ENCODE measurements at regions of chr2 and their contacts with region 1.

Region 1: DNA sequence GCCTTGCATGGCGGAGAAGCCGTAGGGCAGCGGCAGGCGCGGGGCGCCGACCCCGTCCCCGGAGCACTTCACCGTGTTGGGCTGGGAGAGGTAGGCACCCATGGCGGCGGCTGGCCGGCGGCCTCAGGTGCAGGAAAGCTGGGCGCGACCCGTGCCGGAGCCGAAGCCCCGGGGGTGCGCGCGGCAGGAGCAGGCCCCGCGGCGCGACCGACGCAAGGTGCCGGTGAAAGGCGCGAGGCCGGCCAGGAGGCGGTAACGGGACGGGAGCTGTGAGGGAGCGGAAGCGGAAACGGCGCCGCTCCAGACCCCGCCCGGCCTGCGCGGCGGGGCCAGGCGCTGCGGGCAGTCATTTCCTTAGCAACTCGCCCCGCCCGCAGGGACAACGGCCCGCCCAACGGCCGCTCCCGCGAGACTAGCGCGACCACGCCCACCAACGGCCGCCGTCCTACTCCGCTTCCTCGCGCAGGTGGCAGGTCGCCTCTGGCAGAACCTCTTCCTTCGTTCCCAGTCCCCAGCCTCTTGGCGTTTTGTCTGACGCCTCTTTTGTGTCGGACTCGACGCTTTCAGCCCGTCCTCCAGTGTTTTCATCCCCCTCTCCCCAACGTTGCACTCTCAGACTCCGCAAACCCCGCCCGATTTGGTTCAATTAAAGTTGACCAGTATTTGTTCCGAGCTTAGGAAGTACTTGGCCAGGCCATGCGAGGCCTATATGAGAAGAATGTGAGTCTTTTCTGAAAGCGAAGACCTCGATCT is at the start of gene PPM1G:
- DNase-seq: peak; percentile 93 to 100 (median 97)

Region 2: DNA sequence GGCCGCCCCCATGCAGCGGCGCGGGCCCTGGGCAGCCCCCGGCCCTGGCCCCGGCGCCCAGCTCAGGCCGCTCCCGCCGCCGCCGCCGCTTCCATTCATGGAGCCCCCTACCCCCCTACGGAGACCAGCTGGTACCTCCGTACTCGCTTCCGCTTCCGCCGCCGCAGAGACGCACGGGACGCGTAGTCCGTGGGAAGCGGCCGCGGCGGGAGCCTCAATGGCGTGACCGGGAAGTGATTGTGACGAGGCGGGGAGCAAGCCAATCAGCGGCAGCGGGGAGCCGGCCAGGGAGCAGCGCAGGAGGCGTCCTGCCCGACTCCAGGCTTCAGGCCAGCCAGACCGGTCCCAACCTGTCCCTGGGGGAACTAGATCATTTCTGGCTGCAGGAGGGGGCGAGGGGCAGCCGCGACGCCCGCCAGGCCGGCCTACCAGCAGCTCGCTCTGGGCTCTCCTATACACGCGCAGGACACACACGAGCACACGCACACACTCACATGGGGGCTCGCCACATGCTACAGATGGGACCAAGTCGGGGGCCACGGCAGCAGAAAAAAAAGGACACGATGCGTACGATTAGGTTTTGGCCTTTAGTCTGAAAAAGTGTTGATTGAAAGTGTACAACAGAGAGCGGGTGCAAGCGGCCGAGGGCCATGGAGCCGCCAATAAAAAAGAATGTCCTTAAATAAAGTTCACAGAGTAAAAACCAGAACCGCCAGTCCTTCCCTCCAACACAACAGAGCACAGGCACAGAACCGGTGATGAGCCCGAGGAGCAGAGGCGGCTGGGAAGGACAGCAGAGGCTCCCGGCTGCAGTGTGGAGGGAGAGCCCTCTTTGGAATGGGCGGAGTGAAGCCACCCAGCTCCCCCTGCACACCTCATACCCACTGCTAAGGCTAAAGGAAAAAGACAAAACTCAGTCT is 28.6 kb before region 1 on chr2 and contains the start of gene ZNF513:
- intact Hi-C with region 1: loop called (anchors 2 kb)
- DNase-seq: peak; percentile 97 to 100 (median 98)

Region 3: GRCh38 chr2:27461118-27461517 is 51.6 kb after region 1 on chr2:
- intact Hi-C with region 1: no loop called
- DNase-seq: no peak

Measured in posterior cingulate gyrus (tissue), 11 donors.